ENCODE measurements at regions of chr3 and their contacts with region 1.

Region 1: GRCh38 chr3:18758047-18758704 is 333.0 kb upstream of the SATB1 start:
- DNase-seq: peak; percentile 38
- H3K4me3 Mint-ChIP-seq: no peak overlapping the region
- H3K27ac Mint-ChIP-seq: peak overlapping the region; percentile 57
- H3K4me1 Mint-ChIP-seq: peaks cover 43% of the 10 kb centered on the region
- H3K27me3 Mint-ChIP-seq: no peaks in the 10 kb centered on the region

Region 2: GRCh38 chr3:17431004-17431403 is 1327.2 kb before region 1 on chr3:
- CTCF ChIA-PET with region 1: no interaction called
- intact Hi-C with region 1: loop called (anchors 5 kb)
- DNase-seq: no peak
- H3K4me3 Mint-ChIP-seq: no peak overlapping the region
- H3K27ac Mint-ChIP-seq: no peak overlapping the region
- H3K4me1 Mint-ChIP-seq: no peaks in the 10 kb centered on the region
- H3K27me3 Mint-ChIP-seq: no peaks in the 10 kb centered on the region

Region 3: DNA sequence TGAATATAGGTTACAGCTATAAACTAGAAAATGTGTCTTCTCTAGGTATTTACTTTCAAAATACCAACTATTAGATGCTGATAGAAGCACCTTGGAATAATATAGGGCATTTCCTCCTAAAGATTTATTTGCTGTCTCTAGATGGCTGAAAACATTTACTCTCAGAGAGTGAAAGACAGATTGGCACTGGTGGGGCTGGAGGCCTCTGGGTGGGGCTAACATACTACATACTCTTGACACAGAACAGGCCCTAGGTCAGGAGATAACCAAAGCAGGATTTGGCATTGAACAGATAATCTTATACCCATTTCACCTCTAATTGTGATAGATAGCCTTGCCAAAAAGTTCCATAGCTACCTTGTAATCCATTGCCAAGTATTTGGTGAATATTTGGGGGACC is 762.4 kb before region 1 on chr3:
- CTCF ChIA-PET with region 1: no interaction called
- intact Hi-C with region 1: loop called (anchors 10 kb)
- DNase-seq: peak; percentile 13
- H3K4me3 Mint-ChIP-seq: no peak overlapping the region
- H3K27ac Mint-ChIP-seq: no peak overlapping the region
- H3K4me1 Mint-ChIP-seq: no peaks in the 10 kb centered on the region
- H3K27me3 Mint-ChIP-seq: no peaks in the 10 kb centered on the region

Region 4: DNA sequence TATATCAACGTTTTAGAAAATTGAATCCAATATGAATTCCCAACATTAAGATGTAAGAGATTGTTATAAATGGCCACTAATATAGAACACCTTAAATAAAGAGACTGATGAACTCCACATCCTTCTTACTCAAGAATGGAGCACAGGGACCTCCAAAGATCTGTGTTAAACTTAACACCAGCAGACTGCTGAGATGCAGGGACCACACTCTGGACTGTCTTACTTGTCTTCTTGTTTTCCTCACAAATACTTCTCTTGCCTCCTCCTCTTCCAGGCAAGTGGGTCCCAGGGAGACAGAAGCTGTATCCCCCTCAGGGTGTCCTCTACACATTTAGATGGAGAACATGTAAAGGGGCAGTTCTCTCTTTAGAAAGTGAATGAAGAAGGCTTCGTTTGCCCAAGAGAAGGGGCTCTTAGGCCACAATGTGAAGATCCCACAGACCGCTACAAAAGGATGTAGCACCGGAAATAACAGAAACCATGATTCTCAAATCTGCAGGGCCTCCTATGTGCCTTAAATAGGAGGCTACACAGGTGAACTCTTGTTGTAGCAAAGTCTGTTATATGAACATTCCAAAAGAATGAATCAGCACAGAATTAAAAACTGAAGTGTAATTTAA is 385.3 kb before region 1 on chr3:
- CTCF ChIA-PET with region 1: no interaction called
- intact Hi-C with region 1: loop called (anchors 1 kb)
- DNase-seq: no peak
- H3K4me3 Mint-ChIP-seq: no peak overlapping the region
- H3K27ac Mint-ChIP-seq: peak overlapping the region; percentile 57
- H3K4me1 Mint-ChIP-seq: peaks cover 93% of the 10 kb centered on the region
- H3K27me3 Mint-ChIP-seq: no peaks in the 10 kb centered on the region

Region 5: DNA sequence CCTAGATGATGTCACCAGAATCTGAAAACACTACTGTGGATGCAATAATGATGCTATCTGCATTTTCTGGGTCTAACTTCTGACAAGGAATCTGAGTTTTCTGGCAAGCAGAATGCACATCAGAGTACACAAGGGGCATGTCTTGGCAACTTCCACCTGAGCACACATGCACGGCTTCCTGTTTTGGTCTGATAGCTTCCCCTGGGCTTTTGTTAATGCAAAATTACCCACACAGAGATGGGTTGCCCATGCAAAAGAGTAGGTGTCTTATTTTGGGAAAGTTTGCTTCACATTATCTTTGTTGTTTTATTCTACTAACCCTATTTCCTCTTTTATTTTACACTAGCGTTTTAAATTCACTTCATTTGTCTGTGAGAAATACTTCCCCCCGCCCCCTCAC is 258.9 kb before region 1 on chr3:
- CTCF ChIA-PET with region 1: interaction called, 3 read pairs
- intact Hi-C with region 1: loop called (anchors 5 kb)
- DNase-seq: peak; percentile 42
- H3K4me3 Mint-ChIP-seq: peak overlapping the region; percentile 46
- H3K27ac Mint-ChIP-seq: peak overlapping the region; percentile 83
- H3K4me1 Mint-ChIP-seq: peaks cover 41% of the 10 kb centered on the region
- H3K27me3 Mint-ChIP-seq: no peaks in the 10 kb centered on the region

Region 6: GRCh38 chr3:18679238-18679637 is 78.9 kb before region 1 on chr3:
- CTCF ChIA-PET with region 1: interaction called, 4 read pairs
- intact Hi-C with region 1: loop called (anchors 1 kb)
- DNase-seq: peak; percentile 77
- H3K4me3 Mint-ChIP-seq: peak overlapping the region; percentile 31
- H3K27ac Mint-ChIP-seq: peak overlapping the region; percentile 81
- H3K4me1 Mint-ChIP-seq: peaks cover 81% of the 10 kb centered on the region
- H3K27me3 Mint-ChIP-seq: no peaks in the 10 kb centered on the region

Measured in activated naive CD4-positive, alpha-beta T cell treated with anti-CD3 and anti-CD28 coated beads for 36 hours (primary cell).